ENCODE measurements at regions of chr4 and their contacts with region 1.

Region 1: GRCh38 chr4:77007358-77008191 is 58.0 kb downstream of the SEPTIN11 start:
- DNase-seq: peak; percentile 82 to 97 (median 96)
- H3K4me3 ChIP-seq: peak overlapping the region in 4 of 7 experiments; percentile 19 to 58 (median 24)
- H3K27ac ChIP-seq: peak overlapping the region; percentile 95 to 96
- H3K4me1 ChIP-seq: peaks cover 24 to 63% (median 42%) of the 10 kb centered on the region in 4 experiments
- H3K27me3 ChIP-seq: no peaks in the 10 kb centered on the region

Region 2: DNA sequence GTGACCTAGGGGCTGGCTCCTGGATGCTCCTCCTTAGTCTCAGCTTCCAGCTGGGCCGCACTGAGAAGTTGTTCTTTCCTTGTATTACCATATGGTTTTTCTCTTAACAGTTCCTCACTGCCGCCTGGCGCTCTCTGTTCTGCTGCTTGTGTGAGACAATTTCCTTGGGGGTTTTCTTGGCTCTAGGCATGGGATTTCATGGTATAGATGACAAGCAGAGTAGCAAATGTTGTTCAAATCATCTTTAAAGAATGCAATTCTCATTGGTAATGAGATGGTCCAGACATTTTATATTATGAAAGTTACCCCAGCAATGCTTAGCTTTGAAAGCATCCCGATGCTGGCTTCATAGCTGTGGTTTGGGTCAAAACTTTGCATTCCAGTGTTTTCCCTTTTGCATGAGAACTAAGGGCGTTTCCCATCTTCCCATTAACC is 20.4 kb before region 1 on chr4:
- CTCF ChIA-PET with region 1: interaction called, 82 read pairs
- POLR2A ChIA-PET with region 1: interaction called, 10 read pairs
- DNase-seq: peak in 1 of 3 donors; percentile 35
- H3K4me3 ChIP-seq: no peak overlapping the region
- H3K27ac ChIP-seq: no peak overlapping the region
- H3K4me1 ChIP-seq: peaks cover 23 to 87% (median 47%) of the 10 kb centered on the region in 4 experiments
- H3K27me3 ChIP-seq: no peaks in the 10 kb centered on the region

Region 3: GRCh38 chr4:76993787-76994641 is 13.6 kb before region 1 on chr4:
- CTCF ChIA-PET with region 1: interaction called, 82 read pairs
- POLR2A ChIA-PET with region 1: interaction called, 10 read pairs
- DNase-seq: no peak
- H3K4me3 ChIP-seq: no peak overlapping the region
- H3K27ac ChIP-seq: no peak overlapping the region
- H3K4me1 ChIP-seq: peaks cover 4 to 33% (median 11%) of the 10 kb centered on the region in 4 experiments
- H3K27me3 ChIP-seq: no peaks in the 10 kb centered on the region

Measured in common myeloid progenitor, CD34-positive (primary cell).